WTC11 (cell line): ENCODE measurements at regions of chr10 and their contacts with region 1.

Region 1: DNA sequence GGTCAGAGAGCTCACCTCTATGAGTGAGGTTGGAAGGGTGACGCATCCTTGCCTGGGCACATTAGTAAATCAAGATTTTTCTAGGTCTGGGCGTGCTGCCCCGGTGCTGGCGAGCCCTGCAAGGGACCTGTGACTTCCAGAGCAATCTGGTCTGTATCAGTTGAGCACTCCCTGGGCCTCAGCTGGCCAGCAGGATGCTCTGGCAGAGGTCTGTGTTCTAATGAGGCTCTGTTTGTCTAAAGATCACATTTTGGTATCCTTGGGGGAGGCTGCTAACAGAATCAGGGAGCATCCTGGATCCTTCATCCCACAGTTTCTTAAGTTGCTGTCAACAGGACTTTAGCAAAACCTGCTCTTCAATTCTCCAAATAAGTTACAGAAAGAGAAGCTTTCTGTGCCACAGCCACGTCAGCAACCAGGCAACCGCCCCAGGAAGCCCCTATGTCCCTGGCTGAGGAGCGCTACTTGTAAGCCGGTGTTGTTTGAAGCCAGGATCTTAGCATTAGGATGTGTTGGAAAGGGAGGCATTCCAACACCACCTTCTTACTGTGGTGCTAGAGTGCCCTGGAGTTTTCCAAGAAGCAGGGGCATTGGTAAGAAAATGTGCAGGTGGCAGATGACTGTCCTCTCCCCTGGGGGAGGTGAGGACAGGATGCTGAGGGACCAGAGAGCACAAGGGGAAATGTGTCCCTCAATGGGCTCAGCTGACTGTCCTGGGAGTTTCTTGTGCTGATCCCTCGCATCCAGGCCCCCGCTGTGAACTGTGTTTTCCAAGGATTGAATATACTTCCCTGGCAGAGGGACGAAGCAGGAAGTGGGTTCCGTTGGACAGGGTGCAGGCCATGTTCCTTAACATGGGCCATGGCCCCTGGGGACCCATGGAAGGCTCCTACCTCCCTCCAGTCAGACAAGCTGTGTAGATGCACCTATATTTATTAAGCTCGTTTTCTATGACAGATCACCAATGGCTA is 139.8 kb upstream of the GDF10 start:
- DNase-seq: no peak
- ATAC-seq: no peak
- H3K4me3 Mint-ChIP-seq: no peak overlapping the region
- H3K27ac Mint-ChIP-seq: no peak overlapping the region
- H3K4me1 Mint-ChIP-seq: peaks cover 6% of the 10 kb centered on the region; the same call in 1 of the 2 replicates
- H3K27me3 Mint-ChIP-seq: no peaks in the 10 kb centered on the region; the same call in 1 of the 2 replicates
- CTCF ChIP-seq: no peak

Region 2: GRCh38 chr10:47145290-47145934 is 14.8 kb before region 1 on chr10:
- CTCF ChIA-PET with region 1: no interaction called
- POLR2A ChIA-PET with region 1: interaction called, 11 read pairs
- DNase-seq: no peak
- ATAC-seq: no peak
- H3K4me3 Mint-ChIP-seq: no peak overlapping the region
- H3K27ac Mint-ChIP-seq: no peak overlapping the region
- H3K4me1 Mint-ChIP-seq: 0 out of 2 replicates have a peak, but pooled peaks cover 4% of the 10 kb centered on the region
- H3K27me3 Mint-ChIP-seq: no peaks in the 10 kb centered on the region; the same call in 1 of the 2 replicates
- CTCF ChIP-seq: no peak

Region 3: DNA sequence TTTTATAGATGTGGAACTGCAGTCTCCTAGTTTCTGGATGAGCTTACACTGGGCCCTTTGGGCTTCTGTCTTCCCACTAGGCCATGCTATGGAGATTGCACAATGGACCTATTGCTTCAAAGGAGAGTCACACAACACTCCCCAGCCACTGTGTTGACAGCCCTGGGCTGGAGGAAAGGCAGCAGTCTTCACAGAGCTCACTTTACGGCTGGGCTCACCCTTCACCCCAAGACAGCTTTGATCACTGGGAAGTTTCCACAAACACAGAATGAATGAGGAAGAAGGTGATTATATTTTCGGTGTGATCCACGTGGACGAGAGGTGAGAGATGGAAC is 47.0 kb after region 1 on chr10:
- CTCF ChIA-PET with region 1: no interaction called
- POLR2A ChIA-PET with region 1: no interaction called
- DNase-seq: no peak
- ATAC-seq: no peak
- H3K4me3 Mint-ChIP-seq: no peak overlapping the region
- H3K27ac Mint-ChIP-seq: no peak overlapping the region
- H3K4me1 Mint-ChIP-seq: peaks cover 4% of the 10 kb centered on the region
- H3K27me3 Mint-ChIP-seq: peaks cover 2% of the 10 kb centered on the region; the same call in 1 of the 2 replicates
- CTCF ChIP-seq: no peak